Astrocyte of the cerebellum (primary cell): ENCODE measurements at regions of chr19 and their contacts with region 1.

Region 1: GRCh38 chr19:1324806-1325567 is 39.3 kb downstream of the EFNA2 start:
- DNase-seq: peak; percentile 71
- H3K4me3 ChIP-seq: peak overlapping the region; percentile 27
- CTCF ChIP-seq: no peak

Region 2: GRCh38 chr19:1279782-1280341 is 45.1 kb before region 1 on chr19:
- in situ Hi-C with region 1: loop called (anchors 5 kb)
- DNase-seq: peak; percentile 71
- H3K4me3 ChIP-seq: no peak overlapping the region
- CTCF ChIP-seq: peak; percentile 97

Region 3: GRCh38 chr19:1373534-1374249 is 48.7 kb after region 1 on chr19:
- in situ Hi-C with region 1: loop called (anchors 5 kb)
- DNase-seq: no peak
- H3K4me3 ChIP-seq: no peak overlapping the region
- CTCF ChIP-seq: no peak

Region 4: GRCh38 chr19:1401138-1401888 is 76.3 kb after region 1 on chr19 and contains the start of gene GAMT:
- in situ Hi-C with region 1: no loop called
- DNase-seq: no peak
- H3K4me3 ChIP-seq: peak within 1 kb of the TSS; percentile 57
- CTCF ChIP-seq: peak; percentile 16

Region 5: GRCh38 chr19:1411255-1412191 is 86.5 kb after region 1 on chr19:
- in situ Hi-C with region 1: loop called (anchors 5 kb)
- DNase-seq: no peak
- H3K4me3 ChIP-seq: peak overlapping the region; percentile 14
- CTCF ChIP-seq: no peak